Activated CD4-positive, alpha-beta T cell treated with anti-CD3 and anti-CD28 coated beads, Interleukin-2, amount 10 ng/mL, durations not matched to agents 24 days and 14 days (primary cell): ENCODE measurements at regions of chr17 and their contacts with region 1.

Region 1: DNA sequence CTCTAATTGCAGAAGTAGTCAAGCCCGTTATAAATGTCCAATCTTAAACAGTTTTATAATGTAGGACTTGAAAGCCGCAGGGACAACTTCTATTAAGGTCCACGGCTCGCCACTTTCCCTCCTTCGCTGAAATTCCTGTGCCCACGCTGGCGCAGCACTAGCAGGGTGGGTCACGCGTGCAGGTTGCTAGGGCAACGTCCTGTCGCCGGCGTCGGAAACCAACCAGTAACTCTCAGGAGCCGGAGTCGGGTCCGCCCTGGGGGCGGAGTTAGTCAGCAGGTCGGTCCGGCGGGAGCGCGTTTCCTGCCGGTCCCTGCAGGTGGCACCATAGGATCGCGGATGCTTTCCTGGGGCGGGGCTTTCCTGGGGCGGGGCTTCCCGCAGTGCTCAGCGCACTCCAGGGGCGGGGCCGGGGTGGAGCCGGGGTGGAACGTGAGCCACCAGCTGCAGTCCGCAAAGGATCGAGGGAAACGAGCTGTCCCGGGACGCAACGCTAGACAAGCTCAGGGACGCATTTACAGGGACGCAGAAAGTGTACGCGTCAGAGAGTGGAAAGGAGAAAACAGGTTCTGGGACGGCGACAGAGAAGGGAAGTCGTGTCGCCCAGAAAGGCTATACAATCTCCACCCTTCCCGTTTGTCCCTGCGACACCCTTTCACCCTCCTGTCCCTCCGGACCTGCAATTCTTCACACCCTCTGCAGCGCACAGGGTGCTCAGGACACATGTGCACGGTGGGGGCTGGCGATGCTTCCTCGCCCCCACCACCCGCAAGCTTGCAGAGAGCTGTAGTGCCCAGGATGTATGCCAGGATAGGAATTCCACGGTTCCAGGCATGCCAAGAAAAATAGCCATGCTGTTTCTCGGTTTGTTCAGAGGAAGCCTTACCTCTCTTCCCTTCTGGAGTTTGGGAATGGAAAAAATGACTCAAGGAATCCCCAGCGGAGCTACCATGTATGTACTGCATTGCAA is 12.4 kb downstream of the COPZ2 start:
- DNase-seq: peak; percentile 99
- H3K4me3 Mint-ChIP-seq: peak overlapping the region; percentile 88
- H3K27ac Mint-ChIP-seq: peak overlapping the region; percentile 83
- H3K4me1 Mint-ChIP-seq: peaks cover 28% of the 10 kb centered on the region
- H3K27me3 Mint-ChIP-seq: peaks cover 22% of the 10 kb centered on the region

Region 2: GRCh38 chr17:48037036-48037837 is 12.0 kb after region 1 on chr17 and contains the start of gene COPZ2:
- intact Hi-C with region 1: loop called (anchors 1 kb)
- DNase-seq: peak; percentile 89
- H3K4me3 Mint-ChIP-seq: peak within 1 kb of the TSS; percentile 86
- H3K27ac Mint-ChIP-seq: peak within 1 kb of the TSS; percentile 62
- H3K4me1 Mint-ChIP-seq: peaks cover 12% of the 10 kb centered on the region
- H3K27me3 Mint-ChIP-seq: peaks cover 39% of the 10 kb centered on the region
- total RNA-seq, gene COPZ2: 4.4 and 4.5 TPM in 2 replicates

Region 3: DNA sequence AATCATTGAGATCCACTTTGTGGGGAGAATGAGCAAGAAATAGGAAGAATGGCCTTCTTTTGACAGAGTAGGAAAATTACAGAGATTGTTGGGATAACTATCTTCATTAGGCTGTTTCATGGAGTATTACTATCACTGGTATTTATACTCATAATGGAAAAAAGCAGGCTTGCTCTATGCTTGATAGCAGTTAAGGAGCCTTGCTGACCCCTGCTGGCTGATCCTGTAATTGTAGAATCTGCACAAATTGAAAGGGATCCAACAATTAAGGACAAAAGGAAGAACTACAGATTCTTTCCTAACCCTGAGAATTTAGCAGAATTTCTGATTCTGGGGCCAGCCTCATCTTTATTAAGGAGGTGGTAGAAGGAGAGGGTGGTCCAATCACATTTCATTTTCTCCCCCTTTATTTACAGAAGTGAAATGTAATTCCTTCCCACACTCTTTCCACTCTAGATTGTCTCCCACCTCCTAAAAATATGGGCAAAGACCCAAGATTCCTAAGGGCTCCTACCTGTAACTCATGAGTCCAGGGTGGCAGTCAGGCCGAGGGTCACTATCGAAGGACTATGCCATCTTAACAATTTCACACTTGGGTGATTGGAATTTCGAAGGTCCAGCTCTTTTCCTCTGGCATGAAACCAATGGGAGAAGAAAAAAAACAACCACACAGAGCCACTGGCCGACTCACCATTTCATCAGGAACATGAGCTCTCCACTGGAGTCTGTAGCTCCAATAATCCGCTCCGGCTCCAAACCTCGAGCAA is 49.3 kb after region 1 on chr17:
- intact Hi-C with region 1: loop called (anchors 1 kb)
- DNase-seq: peak; percentile 93
- H3K4me3 Mint-ChIP-seq: no peak overlapping the region
- H3K27ac Mint-ChIP-seq: no peak overlapping the region
- H3K4me1 Mint-ChIP-seq: peaks cover 3% of the 10 kb centered on the region
- H3K27me3 Mint-ChIP-seq: no peaks in the 10 kb centered on the region

Region 4: GRCh38 chr17:48131216-48131824 is 106.1 kb after region 1 on chr17:
- intact Hi-C with region 1: loop called (anchors 2 kb)
- DNase-seq: peak; percentile 88
- H3K4me3 Mint-ChIP-seq: no peak overlapping the region
- H3K27ac Mint-ChIP-seq: peak overlapping the region; percentile 15
- H3K4me1 Mint-ChIP-seq: no peaks in the 10 kb centered on the region
- H3K27me3 Mint-ChIP-seq: no peaks in the 10 kb centered on the region

Region 5: DNA sequence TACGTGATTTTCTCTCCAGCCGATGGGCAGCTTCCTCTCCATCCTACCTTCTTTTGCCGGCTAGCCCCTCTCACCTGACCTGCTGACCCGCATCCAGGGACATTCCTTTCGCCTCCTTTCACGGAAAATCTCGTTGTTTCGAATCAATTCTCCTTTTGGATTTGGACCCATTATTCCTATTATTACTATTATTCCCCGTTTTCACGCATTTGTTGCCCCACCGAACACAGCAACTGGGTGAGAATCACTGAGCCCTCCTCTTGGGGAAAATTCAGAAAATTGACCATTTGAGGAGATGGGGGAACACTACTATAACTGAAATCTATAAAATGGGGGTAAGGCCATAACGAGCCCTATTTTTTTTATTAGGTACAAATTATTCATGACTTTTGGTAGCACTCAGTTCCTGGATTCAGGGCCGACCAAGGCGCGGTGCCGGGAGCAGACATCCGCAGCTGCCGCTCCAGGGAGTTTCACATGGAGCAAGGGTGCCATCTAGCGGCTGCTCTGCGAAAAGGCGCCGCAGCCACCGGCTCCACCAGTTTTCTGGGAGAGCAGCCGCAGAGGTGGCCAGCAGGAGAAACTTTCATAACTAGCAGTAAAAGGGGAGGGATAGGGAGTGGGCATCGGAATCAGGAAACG is 593.2 kb after region 1 on chr17:
- intact Hi-C with region 1: loop called (anchors 1 kb)
- DNase-seq: peak; percentile 95
- H3K4me3 Mint-ChIP-seq: peak overlapping the region; percentile 4
- H3K27ac Mint-ChIP-seq: peak overlapping the region; percentile 48
- H3K4me1 Mint-ChIP-seq: peaks cover 30% of the 10 kb centered on the region
- H3K27me3 Mint-ChIP-seq: peaks cover 90% of the 10 kb centered on the region